Dorsolateral prefrontal cortex (tissue), 120 donors: ENCODE measurements at regions of chr7 and their contacts with region 1.

Region 1: GRCh38 chr7:74068393-74069085 is 15.1 kb upstream of the LIMK1 start:
- DNase-seq: no peak
- H3K4me3 ChIP-seq: no peak overlapping the region
- H3K27ac ChIP-seq: peak overlapping the region in 1 of 59 donors; percentile 64
- H3K27me3 ChIP-seq: no peaks in the 10 kb centered on the region
- CTCF ChIP-seq: no peak

Region 2: GRCh38 chr7:74173866-74174605 is 105.5 kb after region 1 on chr7 and contains the start of gene EIF4H:
- intact Hi-C with region 1: loop called in 1 of 2 experiments (anchors 5 kb)
- DNase-seq: peak; percentile 89 to 96 (median 93)
- H3K4me3 ChIP-seq: peak within 1 kb of the TSS; percentile 60 to 99 (median 95)
- H3K27ac ChIP-seq: peak within 1 kb of the TSS; percentile 65 to 98 (median 93)
- H3K27me3 ChIP-seq: no peaks in the 10 kb centered on the region
- CTCF ChIP-seq: peak in 20 of 56 donors; percentile 1 to 62 (median 28)
- total RNA-seq, gene EIF4H: 190 to 323 (median 261) TPM

Region 3: GRCh38 chr7:74206589-74207120 is 138.1 kb after region 1 on chr7:
- intact Hi-C with region 1: loop called in 1 of 2 experiments (anchors 5 kb)
- DNase-seq: peak; percentile 80 to 91 (median 86)
- H3K4me3 ChIP-seq: peak overlapping the region in 57 of 59 donors; percentile 14 to 62 (median 37)
- H3K27ac ChIP-seq: peak overlapping the region in 6 of 59 donors; percentile 6 to 76 (median 48)
- H3K27me3 ChIP-seq: no peaks in the 10 kb centered on the region
- CTCF ChIP-seq: peak; percentile 85 to 99 (median 98)

Region 4: GRCh38 chr7:74401137-74401859 is 332.8 kb after region 1 on chr7:
- intact Hi-C with region 1: loop called in 1 of 2 experiments (anchors 2 kb)
- DNase-seq: peak; percentile 67 to 86 (median 76)
- H3K4me3 ChIP-seq: no peak overlapping the region
- H3K27ac ChIP-seq: peak overlapping the region in 23 of 59 donors; percentile 8 to 71 (median 35)
- H3K27me3 ChIP-seq: no peaks in the 10 kb centered on the region
- CTCF ChIP-seq: peak; percentile 88 to 99 (median 96)